ENCODE measurements at regions of chr6 and their contacts with region 1.

Region 1: GRCh38 chr6:37018198-37019064 is 13.0 kb downstream of the FGD2 start:
- DNase-seq: peak; percentile 96
- ATAC-seq: peak; percentile 95
- H3K4me3 Mint-ChIP-seq: no peak overlapping the region
- H3K27ac Mint-ChIP-seq: peak overlapping the region; percentile 62
- H3K4me1 Mint-ChIP-seq: peaks cover 56% of the 10 kb centered on the region
- H3K27me3 Mint-ChIP-seq: no peaks in the 10 kb centered on the region

Region 2: DNA sequence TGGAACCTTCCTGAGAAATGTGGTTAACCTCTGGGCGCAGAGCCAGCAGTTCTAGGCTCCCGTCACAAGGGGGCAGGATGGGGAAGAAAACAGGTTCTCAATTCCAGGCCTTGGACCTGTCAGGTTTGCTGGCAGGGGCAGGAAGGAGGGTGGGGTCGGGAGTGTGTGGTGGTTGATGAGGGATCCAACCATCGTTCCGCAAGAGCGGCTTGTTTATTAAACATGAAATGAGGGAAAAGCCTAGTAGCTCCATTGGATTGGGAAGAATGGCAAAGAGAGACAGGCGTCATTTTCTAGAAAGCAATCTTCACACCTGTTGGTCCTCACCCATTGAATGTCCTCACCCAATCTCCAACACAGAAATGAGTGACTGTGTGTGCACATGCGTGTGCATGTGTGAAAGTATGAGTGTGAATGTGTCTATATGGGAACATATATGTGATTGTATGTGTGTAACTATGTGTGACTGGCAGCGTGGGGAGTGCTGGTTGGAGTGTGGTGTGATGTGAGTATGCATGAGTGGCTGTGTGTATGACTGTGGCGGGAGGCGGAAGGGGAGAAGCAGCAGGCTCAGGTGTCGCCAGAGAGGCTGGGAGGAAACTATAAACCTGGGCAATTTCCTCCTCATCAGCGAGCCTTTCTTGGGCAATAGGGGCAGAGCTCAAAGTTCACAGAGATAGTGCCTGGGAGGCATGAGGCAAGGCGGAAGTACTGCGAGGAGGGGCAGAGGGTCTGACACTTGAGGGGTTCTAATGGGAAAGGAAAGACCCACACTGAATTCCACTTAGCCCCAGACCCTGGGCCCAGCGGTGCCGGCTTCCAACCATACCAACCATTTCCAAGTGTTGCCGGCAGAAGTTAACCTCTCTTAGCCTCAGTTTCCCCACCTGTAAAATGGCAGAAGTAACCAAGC is 394.6 kb before region 1 on chr6:
- CTCF ChIA-PET with region 1: no interaction called
- POLR2A ChIA-PET with region 1: no interaction called
- DNase-seq: peak; percentile 83
- ATAC-seq: peak; percentile 77
- H3K4me3 Mint-ChIP-seq: no peak overlapping the region
- H3K27ac Mint-ChIP-seq: peak overlapping the region; percentile 1
- H3K4me1 Mint-ChIP-seq: peaks cover 38% of the 10 kb centered on the region
- H3K27me3 Mint-ChIP-seq: no peaks in the 10 kb centered on the region

Region 3: DNA sequence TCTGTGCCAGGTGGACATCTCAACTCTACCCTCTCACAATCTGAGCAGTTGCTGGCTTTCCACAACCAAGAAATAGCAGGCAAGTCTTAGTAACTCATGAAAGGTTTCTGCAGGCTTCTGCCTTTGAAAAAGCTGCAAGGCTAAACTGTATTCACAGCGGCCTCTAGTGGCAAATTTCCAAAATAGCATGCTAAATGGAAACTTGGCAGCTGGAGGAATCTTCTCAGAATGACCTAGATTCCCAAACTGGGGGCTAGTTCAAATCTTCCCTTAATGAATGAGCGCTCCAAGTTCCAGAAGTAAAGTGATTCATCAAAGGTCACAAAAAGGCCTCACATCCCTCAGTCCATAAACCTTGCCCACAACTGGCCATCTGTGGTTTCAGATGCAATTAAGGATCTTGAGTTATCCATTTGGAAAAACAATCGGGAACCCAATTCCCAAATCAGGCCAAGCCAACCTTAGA is 167.2 kb before region 1 on chr6:
- CTCF ChIA-PET with region 1: interaction called, 24 read pairs
- POLR2A ChIA-PET with region 1: interaction called, 3 read pairs
- DNase-seq: peak; percentile 68
- ATAC-seq: no peak
- H3K4me3 Mint-ChIP-seq: no peak overlapping the region
- H3K27ac Mint-ChIP-seq: no peak overlapping the region
- H3K4me1 Mint-ChIP-seq: peaks cover 5% of the 10 kb centered on the region
- H3K27me3 Mint-ChIP-seq: no peaks in the 10 kb centered on the region

Region 4: DNA sequence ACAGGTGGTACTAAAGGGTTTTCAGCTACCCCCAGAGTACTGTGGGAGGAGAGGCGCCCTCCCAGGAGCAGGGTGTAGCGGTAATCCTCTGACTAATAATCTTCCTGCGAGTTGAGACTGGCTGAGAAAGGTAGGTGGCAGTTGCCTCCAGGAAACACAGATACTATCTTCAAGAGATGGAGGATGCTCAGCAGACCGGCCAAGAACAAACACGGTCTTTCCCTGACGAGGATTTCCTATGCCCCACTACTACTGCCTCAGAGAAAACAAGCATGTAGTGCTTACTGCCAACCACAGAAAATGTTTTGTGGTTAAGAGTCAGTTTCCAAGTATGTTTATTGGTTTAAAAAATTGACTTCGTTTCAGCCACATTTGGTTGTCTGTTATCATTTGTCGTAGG is 105.8 kb before region 1 on chr6:
- CTCF ChIA-PET with region 1: interaction called, 45 read pairs
- POLR2A ChIA-PET with region 1: no interaction called
- DNase-seq: peak; percentile 83
- ATAC-seq: peak; percentile 94
- H3K4me3 Mint-ChIP-seq: peak overlapping the region; percentile 72
- H3K27ac Mint-ChIP-seq: peak overlapping the region; percentile 87
- H3K4me1 Mint-ChIP-seq: peaks cover 57% of the 10 kb centered on the region
- H3K27me3 Mint-ChIP-seq: no peaks in the 10 kb centered on the region

Region 5: GRCh38 chr6:37005061-37005810 is 13.2 kb before region 1 on chr6 and contains the start of gene FGD2:
- CTCF ChIA-PET with region 1: interaction called, 63 read pairs
- POLR2A ChIA-PET with region 1: interaction called, 10 read pairs
- DNase-seq: no peak
- ATAC-seq: peak; percentile 31
- H3K4me3 Mint-ChIP-seq: peak within 1 kb of the TSS; percentile 56
- H3K27ac Mint-ChIP-seq: peak within 1 kb of the TSS; percentile 71
- H3K4me1 Mint-ChIP-seq: peaks cover 32% of the 10 kb centered on the region
- H3K27me3 Mint-ChIP-seq: peaks cover 3% of the 10 kb centered on the region
- total RNA-seq, gene FGD2: 10.1 to 12.1 TPM

Region 6: GRCh38 chr6:37102279-37103168 is 84.1 kb after region 1 on chr6:
- CTCF ChIA-PET with region 1: interaction called, 12 read pairs
- POLR2A ChIA-PET with region 1: no interaction called
- DNase-seq: peak; percentile 83
- ATAC-seq: peak; percentile 92
- H3K4me3 Mint-ChIP-seq: peak overlapping the region; percentile 67
- H3K27ac Mint-ChIP-seq: peak overlapping the region; percentile 81
- H3K4me1 Mint-ChIP-seq: peaks cover 56% of the 10 kb centered on the region
- H3K27me3 Mint-ChIP-seq: peaks cover 3% of the 10 kb centered on the region

Region 7: DNA sequence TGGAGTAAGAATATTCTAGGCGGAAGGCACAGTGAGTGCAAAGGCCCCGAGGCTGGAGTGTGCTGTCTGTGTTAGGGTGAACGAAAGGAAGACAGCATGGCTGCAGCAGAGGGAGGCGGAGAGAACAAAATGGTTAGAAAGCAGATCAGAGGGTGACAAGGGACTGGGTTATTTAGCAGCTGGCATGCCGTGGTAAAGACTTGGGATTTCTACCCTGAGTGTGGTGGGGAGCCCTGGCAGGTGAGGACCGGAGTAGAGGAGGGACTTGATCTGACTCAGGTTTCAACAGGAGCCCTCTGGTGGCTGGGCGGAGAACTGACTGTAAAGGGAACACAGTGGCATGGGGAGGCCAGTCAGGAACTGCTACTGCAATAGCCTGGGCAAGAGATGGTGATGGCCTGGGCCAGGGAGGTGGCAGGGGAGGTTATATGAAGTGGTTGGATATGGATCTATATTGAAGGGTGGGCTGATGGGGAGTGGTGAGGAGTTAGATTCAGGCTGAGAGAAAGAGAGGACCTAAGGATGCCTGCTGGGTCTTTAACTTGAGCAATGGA is 189.5 kb after region 1 on chr6:
- CTCF ChIA-PET with region 1: interaction called, 769 read pairs
- POLR2A ChIA-PET with region 1: interaction called, 27 read pairs
- DNase-seq: peak; percentile 94
- ATAC-seq: peak; percentile 70
- H3K4me3 Mint-ChIP-seq: peak overlapping the region; percentile 45
- H3K27ac Mint-ChIP-seq: peak overlapping the region; percentile 87
- H3K4me1 Mint-ChIP-seq: peaks cover 79% of the 10 kb centered on the region
- H3K27me3 Mint-ChIP-seq: no peaks in the 10 kb centered on the region

Measured in activated CD8-positive, alpha-beta T cell treated with anti-CD3 and anti-CD28 coated beads, Interleukin-2, amount 10 ng/mL, durations not matched to agents 7 days and 5 days (primary cell).